ENCODE measurements at regions of chr20 and their contacts with region 1.

Region 1: DNA sequence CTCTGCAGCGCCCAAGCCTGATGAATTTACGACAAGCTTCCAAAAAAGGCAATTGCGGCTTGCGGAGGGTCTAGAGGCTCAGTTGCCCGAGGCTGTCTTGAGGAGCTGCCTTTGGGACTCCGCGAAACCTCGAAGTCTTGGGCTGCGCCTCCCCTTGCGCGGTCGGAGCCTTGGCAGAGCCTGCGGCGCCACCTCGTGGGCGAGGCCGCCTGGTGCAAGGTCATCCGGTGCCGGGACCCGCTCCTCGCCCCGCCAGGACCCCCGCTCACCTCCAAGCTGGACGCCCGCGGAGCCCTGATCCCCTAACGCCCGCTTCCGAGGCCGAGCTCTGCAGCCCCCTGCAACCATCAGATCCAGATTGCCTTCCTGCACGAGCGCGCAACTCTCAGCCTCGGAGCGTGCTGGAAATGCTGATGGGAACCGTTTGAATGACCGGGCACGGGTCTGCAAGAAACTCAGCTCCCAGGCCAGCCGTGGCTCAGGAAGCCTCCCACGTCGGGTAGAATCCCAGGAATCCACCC is 14.9 kb upstream of the FAM210B start:
- DNase-seq: peak; percentile 87
- H3K4me3 ChIP-seq: peak overlapping the region; percentile 35 to 50
- H3K27ac ChIP-seq: no peak overlapping the region
- H3K4me1 ChIP-seq: peaks cover 0 to 6% of the 10 kb centered on the region in 2 experiments; a peak in 1 of 4 replicates
- H3K27me3 ChIP-seq: no peaks in the 10 kb centered on the region; the same call in 1 of the 2 replicates
- CTCF ChIP-seq: peak; percentile 71
- EP300 ChIP-seq: no peak
- RAD21 ChIP-seq: peak; percentile 72

Region 2: GRCh38 chr20:56187534-56188198 is 156.3 kb before region 1 on chr20:
- CTCF ChIA-PET with region 1: interaction called, 23 read pairs
- POLR2A ChIA-PET with region 1: no interaction called
- DNase-seq: peak; percentile 42
- H3K4me3 ChIP-seq: no peak overlapping the region
- H3K27ac ChIP-seq: no peak overlapping the region
- H3K4me1 ChIP-seq: peaks cover 0 to 10% of the 10 kb centered on the region in 2 experiments; a peak in 1 of 4 replicates
- H3K27me3 ChIP-seq: no peaks in the 10 kb centered on the region
- CTCF ChIP-seq: no peak
- EP300 ChIP-seq: no peak
- RAD21 ChIP-seq: peak; percentile 61

Region 3: DNA sequence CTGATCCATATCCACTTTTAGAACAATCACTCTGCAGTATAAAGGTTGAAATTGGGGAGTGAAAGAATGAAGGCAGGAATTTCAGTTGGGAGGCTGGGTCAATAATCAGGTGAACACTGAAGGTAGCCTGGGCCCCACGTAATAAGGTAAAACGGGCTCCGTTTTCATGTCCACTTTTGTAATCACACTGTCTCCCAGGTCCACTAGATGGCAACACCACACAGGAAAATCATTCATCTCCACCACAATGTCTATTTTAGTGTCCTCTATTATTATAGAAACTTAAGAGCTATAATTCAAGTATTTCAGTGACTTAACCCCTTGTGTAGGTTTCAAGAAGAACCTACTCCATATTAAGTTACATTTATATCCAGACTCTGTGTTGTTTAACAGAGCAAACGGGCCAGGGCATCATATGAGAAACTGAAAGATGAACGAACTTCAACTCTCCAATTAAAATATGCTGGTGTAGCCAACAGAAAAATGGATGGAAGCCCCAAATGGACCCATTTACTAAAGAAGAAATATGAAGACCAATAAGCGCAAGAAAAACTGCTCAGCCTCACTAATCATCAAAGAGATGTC is 141.3 kb before region 1 on chr20:
- CTCF ChIA-PET with region 1: interaction called, 12 read pairs
- POLR2A ChIA-PET with region 1: no interaction called
- DNase-seq: peak; percentile 44
- H3K4me3 ChIP-seq: no peak overlapping the region
- H3K27ac ChIP-seq: no peak overlapping the region
- H3K4me1 ChIP-seq: no peaks in the 10 kb centered on the region
- H3K27me3 ChIP-seq: no peaks in the 10 kb centered on the region
- CTCF ChIP-seq: peak; percentile 28
- EP300 ChIP-seq: no peak
- RAD21 ChIP-seq: peak; percentile 64

Region 4: GRCh38 chr20:56247948-56248782 is 95.8 kb before region 1 on chr20 and contains the start of gene MC3R:
- CTCF ChIA-PET with region 1: interaction called, 36 read pairs
- POLR2A ChIA-PET with region 1: no interaction called
- DNase-seq: peak; percentile 52
- H3K4me3 ChIP-seq: no peak within 1 kb of the TSS
- H3K27ac ChIP-seq: no peak within 1 kb of the TSS
- H3K4me1 ChIP-seq: no peaks in the 10 kb centered on the region; a peak in 1 of 4 replicates
- H3K27me3 ChIP-seq: no peaks in the 10 kb centered on the region
- CTCF ChIP-seq: peak; percentile 41
- EP300 ChIP-seq: no peak
- RAD21 ChIP-seq: peak; percentile 71
- polyA plus RNA-seq, gene MC3R: not detected in 2 replicates

Region 5: DNA sequence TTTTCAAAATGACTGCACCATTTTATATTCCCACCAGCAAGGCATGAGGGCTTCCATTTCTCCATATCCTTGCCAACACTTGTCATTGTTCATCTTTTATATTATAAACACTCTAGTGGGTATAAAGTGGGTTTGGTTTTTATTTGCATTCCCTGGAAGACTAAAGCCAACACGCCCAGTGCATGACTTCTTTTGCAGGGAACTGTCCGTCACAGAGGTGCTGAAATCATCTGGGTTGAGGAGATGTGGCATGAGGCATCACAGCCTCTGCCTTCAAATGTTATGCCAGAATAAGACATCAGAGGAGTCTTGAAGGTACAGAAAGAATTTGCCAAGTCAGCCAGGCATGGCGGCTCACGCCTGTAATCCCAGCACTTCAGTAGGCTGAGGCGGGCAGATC is 15.1 kb before region 1 on chr20:
- CTCF ChIA-PET with region 1: interaction called, 10 read pairs
- POLR2A ChIA-PET with region 1: no interaction called
- DNase-seq: no peak
- H3K4me3 ChIP-seq: no peak overlapping the region
- H3K27ac ChIP-seq: no peak overlapping the region
- H3K4me1 ChIP-seq: no peaks in the 10 kb centered on the region
- H3K27me3 ChIP-seq: no peaks in the 10 kb centered on the region
- CTCF ChIP-seq: no peak
- EP300 ChIP-seq: no peak
- RAD21 ChIP-seq: no peak